Activated CD8-positive, alpha-beta T cell treated with anti-CD3 and anti-CD28 coated beads for 36 hours (primary cell): ENCODE measurements at regions of chr7 and their contacts with region 1.

Region 1: DNA sequence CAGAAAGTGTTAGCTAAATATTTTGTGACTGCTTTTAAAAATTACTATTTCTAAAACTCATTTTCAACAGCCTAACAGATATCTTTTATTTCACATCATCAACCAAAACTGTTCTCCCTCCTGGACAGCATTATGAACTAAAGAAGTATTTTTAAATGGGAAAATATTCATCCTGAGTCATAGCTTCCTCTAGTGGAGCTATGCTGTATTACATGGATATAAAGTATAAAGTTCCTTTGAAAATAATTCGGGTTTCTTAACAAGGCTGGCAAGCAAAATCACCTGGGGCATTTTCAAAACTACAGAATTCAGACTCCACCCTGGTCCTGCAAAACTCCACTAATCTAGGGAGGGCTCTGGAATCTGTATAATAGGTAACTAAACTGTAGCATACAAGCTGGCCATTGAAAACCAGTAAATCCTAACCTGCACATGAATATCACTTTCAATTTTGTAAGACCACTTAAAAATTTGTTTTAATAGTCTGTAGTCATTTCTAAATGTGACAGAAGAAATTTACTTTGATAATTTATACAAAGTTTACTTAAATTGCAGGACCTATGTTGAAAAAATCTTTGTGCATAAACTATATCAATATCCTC is 53.5 kb downstream of the SCIN start:
- DNase-seq: no peak
- ATAC-seq: no peak
- H3K4me3 Mint-ChIP-seq: no peak overlapping the region
- H3K27ac Mint-ChIP-seq: no peak overlapping the region
- H3K4me1 Mint-ChIP-seq: peaks cover 6% of the 10 kb centered on the region
- H3K27me3 Mint-ChIP-seq: peaks cover 9% of the 10 kb centered on the region
- CTCF ChIP-seq: peak; percentile 71

Region 2: GRCh38 chr7:12518920-12519681 is 104.9 kb before region 1 on chr7:
- CTCF ChIA-PET with region 1: interaction called, 35 read pairs
- POLR2A ChIA-PET with region 1: no interaction called
- intact Hi-C with region 1: loop called (anchors 5 kb)
- DNase-seq: no peak
- ATAC-seq: peak; percentile 34
- H3K4me3 Mint-ChIP-seq: no peak overlapping the region
- H3K27ac Mint-ChIP-seq: no peak overlapping the region
- H3K4me1 Mint-ChIP-seq: no peaks in the 10 kb centered on the region
- H3K27me3 Mint-ChIP-seq: peaks cover 9% of the 10 kb centered on the region
- CTCF ChIP-seq: peak; percentile 34

Region 3: GRCh38 chr7:12524794-12525386 is 99.1 kb before region 1 on chr7:
- CTCF ChIA-PET with region 1: interaction called, 35 read pairs
- POLR2A ChIA-PET with region 1: no interaction called
- intact Hi-C with region 1: no loop called
- DNase-seq: no peak
- ATAC-seq: peak; percentile 42
- H3K4me3 Mint-ChIP-seq: no peak overlapping the region
- H3K27ac Mint-ChIP-seq: no peak overlapping the region
- H3K4me1 Mint-ChIP-seq: no peaks in the 10 kb centered on the region
- H3K27me3 Mint-ChIP-seq: peaks cover 8% of the 10 kb centered on the region
- CTCF ChIP-seq: peak; percentile 84